ENCODE measurements at regions of chr17 and their contacts with region 1.

Region 1: GRCh38 chr17:12744298-12744697 is 45.0 kb upstream of the ARHGAP44 start:
- DNase-seq: no peak
- ATAC-seq: no peak
- H3K4me3 ChIP-seq: no peak overlapping the region
- H3K27ac ChIP-seq: no peak overlapping the region
- H3K4me1 ChIP-seq: peaks cover 4 to 6% of the 10 kb centered on the region in 2 experiments; a peak in 3 of 4 replicates
- H3K27me3 ChIP-seq: peaks cover 5% of the 10 kb centered on the region; the same call in 1 of the 2 replicates
- CTCF ChIP-seq: no peak
- POLR2A ChIP-seq: no peak
- RAD21 ChIP-seq: no peak

Region 2: GRCh38 chr17:12180644-12181261 is 563.5 kb before region 1 on chr17:
- CTCF ChIA-PET with region 1: interaction called, 5 read pairs
- POLR2A ChIA-PET with region 1: no interaction called
- RAD21 ChIA-PET with region 1: no interaction called
- intact Hi-C with region 1: loop called (anchors 1 kb)
- DNase-seq: peak; percentile 47
- ATAC-seq: peak; percentile 79
- H3K4me3 ChIP-seq: no peak overlapping the region
- H3K27ac ChIP-seq: no peak overlapping the region
- H3K4me1 ChIP-seq: no peaks in the 10 kb centered on the region
- H3K27me3 ChIP-seq: no peaks in the 10 kb centered on the region
- CTCF ChIP-seq: peak; percentile 51 to 89 (median 70); a peak in 5 of 6 replicates
- POLR2A ChIP-seq: no peak
- RAD21 ChIP-seq: peak; percentile 71

Region 3: GRCh38 chr17:12256380-12256995 is 487.8 kb before region 1 on chr17:
- CTCF ChIA-PET with region 1: interaction called, 4 read pairs
- POLR2A ChIA-PET with region 1: no interaction called
- RAD21 ChIA-PET with region 1: interaction called in 1 of 2 experiments, 4 read pairs
- intact Hi-C with region 1: loop called (anchors 1 kb)
- DNase-seq: peak; percentile 37
- ATAC-seq: peak; percentile 74
- H3K4me3 ChIP-seq: no peak overlapping the region
- H3K27ac ChIP-seq: no peak overlapping the region
- H3K4me1 ChIP-seq: no peaks in the 10 kb centered on the region
- H3K27me3 ChIP-seq: peaks cover 30% of the 10 kb centered on the region; the same call in 1 of the 2 replicates
- CTCF ChIP-seq: peak; percentile 54 to 81 (median 73); a peak in 5 of 6 replicates
- POLR2A ChIP-seq: no peak
- RAD21 ChIP-seq: peak; percentile 68

Region 4: GRCh38 chr17:12342609-12343435 is 401.5 kb before region 1 on chr17:
- CTCF ChIA-PET with region 1: interaction called, 27 read pairs
- POLR2A ChIA-PET with region 1: interaction called, 3 read pairs
- RAD21 ChIA-PET with region 1: no interaction called
- intact Hi-C with region 1: loop called (anchors 1 kb)
- DNase-seq: peak; percentile 8
- ATAC-seq: peak; percentile 82
- H3K4me3 ChIP-seq: no peak overlapping the region
- H3K27ac ChIP-seq: no peak overlapping the region
- H3K4me1 ChIP-seq: no peaks in the 10 kb centered on the region
- H3K27me3 ChIP-seq: peaks cover 17% of the 10 kb centered on the region
- CTCF ChIP-seq: peak; percentile 22 to 85 (median 71); a peak in 5 of 6 replicates
- POLR2A ChIP-seq: no peak
- RAD21 ChIP-seq: peak; percentile 45

Region 5: DNA sequence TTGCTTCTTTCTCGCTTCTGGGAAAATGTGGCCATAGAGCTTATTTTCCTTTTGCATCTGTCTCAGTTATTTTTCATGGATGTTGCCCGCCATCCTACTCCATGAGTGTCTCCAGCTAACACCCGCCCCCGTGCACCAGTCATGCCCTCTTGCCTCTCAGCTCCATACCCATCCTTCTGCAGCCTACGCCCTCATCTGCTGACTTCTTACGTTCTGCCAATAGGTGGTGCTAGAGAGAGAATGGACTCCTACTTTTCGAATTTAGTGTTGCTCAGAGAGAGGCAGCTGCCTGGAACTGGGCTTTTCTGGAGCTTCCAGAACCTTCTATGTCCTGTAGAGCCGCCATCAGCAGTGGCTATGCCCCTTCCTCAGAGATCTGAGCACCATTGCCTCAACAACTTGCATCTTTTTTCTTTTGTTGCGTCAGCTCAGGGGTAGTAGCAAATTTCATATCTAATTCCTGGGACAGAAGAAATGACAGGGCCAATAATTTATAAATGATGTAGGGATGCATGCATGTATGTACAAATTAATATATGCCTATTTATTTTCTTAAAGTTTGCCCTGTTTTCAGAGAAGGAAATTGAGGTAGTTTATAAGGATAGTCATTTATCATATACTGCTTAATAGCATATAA is 198.3 kb before region 1 on chr17:
- CTCF ChIA-PET with region 1: interaction called, 27 read pairs
- POLR2A ChIA-PET with region 1: no interaction called
- RAD21 ChIA-PET with region 1: no interaction called
- intact Hi-C with region 1: loop called (anchors 1 kb)
- DNase-seq: peak; percentile 38
- ATAC-seq: peak; percentile 91
- H3K4me3 ChIP-seq: no peak overlapping the region
- H3K27ac ChIP-seq: no peak overlapping the region
- H3K4me1 ChIP-seq: no peaks in the 10 kb centered on the region
- H3K27me3 ChIP-seq: peaks cover 17% of the 10 kb centered on the region; the same call in 1 of the 2 replicates
- CTCF ChIP-seq: peak; percentile 34 to 81 (median 74); a peak in 5 of 6 replicates
- POLR2A ChIP-seq: no peak
- RAD21 ChIP-seq: peak; percentile 35

Region 6: DNA sequence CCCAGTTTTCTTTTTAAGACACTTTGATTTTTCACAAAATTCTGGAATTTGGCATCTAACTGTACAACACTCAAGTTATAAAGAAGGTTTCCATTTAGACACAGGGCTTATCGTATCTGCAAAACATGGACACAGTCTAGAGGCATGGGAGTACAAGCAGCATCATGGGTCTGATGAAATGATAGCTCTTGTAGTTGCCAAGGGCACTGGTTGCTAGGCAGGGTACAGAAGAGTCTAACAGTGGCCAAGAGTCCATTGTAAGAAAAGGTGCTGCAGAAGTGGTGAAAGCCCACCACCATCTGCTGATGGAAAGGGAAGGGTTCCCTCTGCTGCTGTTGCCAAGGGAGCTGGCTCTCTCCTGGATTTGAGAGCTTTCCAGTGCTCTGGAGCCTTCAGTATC is 57.8 kb before region 1 on chr17:
- CTCF ChIA-PET with region 1: no interaction called
- POLR2A ChIA-PET with region 1: no interaction called
- RAD21 ChIA-PET with region 1: no interaction called
- intact Hi-C with region 1: no loop called
- DNase-seq: no peak
- ATAC-seq: no peak
- H3K4me3 ChIP-seq: no peak overlapping the region
- H3K27ac ChIP-seq: no peak overlapping the region
- H3K4me1 ChIP-seq: no peaks in the 10 kb centered on the region
- H3K27me3 ChIP-seq: peaks cover 30% of the 10 kb centered on the region
- CTCF ChIP-seq: no peak
- POLR2A ChIP-seq: no peak
- RAD21 ChIP-seq: no peak

Region 7: DNA sequence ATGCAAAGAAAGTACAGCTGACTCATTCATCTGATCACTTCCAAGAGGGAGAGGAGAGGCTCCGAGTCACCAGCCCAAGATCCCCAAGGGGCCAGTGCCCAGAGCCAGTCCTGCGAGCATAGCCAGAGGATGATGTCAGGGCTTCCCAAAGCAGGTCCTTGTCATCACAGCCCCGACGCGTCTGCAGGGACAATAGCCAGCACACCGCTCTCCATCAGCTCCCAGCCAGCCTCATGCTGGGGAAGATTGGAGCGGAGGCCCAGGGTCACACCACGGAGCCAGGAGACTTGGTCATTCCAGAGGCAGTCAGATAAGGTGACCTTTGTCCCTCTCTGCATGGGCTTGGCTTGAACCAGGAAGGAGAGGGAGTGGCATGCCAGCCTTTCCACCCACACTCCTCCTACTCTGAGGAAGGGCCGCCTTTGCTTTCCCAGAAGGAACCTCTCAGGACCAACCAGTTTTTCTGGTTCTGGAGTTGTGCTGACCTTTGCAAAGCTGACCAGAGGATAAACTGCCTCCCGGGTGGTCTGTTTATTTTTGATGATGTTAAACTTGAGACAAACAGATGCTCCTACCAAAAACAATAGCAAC is 13.3 kb before region 1 on chr17:
- CTCF ChIA-PET with region 1: interaction called, 14 read pairs
- POLR2A ChIA-PET with region 1: interaction called, 4 read pairs
- RAD21 ChIA-PET with region 1: no interaction called
- intact Hi-C with region 1: no loop called
- DNase-seq: peak; percentile 66
- ATAC-seq: peak; percentile 97
- H3K4me3 ChIP-seq: peak overlapping the region; percentile 10 to 37; a peak in 3 of 4 replicates
- H3K27ac ChIP-seq: peak overlapping the region; percentile 55
- H3K4me1 ChIP-seq: peaks cover 16 to 35% of the 10 kb centered on the region in 2 experiments
- H3K27me3 ChIP-seq: no peaks in the 10 kb centered on the region
- CTCF ChIP-seq: no peak
- POLR2A ChIP-seq: no peak
- RAD21 ChIP-seq: no peak

Measured in HCT116 (cell line).